Naive thymus-derived CD4-positive, alpha-beta T cell (primary cell): ENCODE measurements at regions of chr4 and their contacts with region 1.

Region 1: GRCh38 chr4:183471946-183472708 is 27.7 kb downstream of the CDKN2AIP start:
- DNase-seq: peak; percentile 51 to 81 (median 71)
- ATAC-seq: peak; percentile 89
- H3K4me3 ChIP-seq: no peak overlapping the region
- H3K4me3 Mint-ChIP-seq: peak overlapping the region in 1 of 10 donors; percentile 8
- H3K27ac ChIP-seq: no peak overlapping the region
- H3K27ac Mint-ChIP-seq: no peak overlapping the region
- H3K4me1 ChIP-seq: no peaks in the 10 kb centered on the region
- H3K4me1 Mint-ChIP-seq: peaks cover 0 to 9% (median 5%) of the 10 kb centered on the region in 7 donors
- H3K27me3 ChIP-seq: no peaks in the 10 kb centered on the region
- H3K27me3 Mint-ChIP-seq: peaks cover 0 to 10% (median 0%) of the 10 kb centered on the region in 5 donors

Region 2: DNA sequence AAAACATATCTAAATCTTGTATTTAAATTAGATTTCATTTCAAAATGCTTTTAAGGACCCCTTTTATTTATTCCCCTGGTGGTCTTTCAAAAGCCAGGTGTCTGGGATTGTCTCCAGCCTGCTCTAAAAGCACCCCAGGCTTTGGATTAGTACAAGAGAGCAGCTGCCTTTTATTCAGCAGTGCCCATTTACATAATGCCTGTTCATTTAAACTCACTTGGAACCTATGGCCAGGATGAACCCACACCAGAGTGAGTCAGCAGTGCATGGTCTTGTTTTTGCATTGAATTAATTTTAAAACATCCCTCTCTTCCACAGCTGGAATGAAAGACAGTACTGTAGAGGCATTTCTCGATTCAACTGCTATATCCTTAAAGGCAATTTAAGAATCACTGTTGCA is 1293.0 kb before region 1 on chr4:
- CTCF ChIA-PET with region 1: no interaction called
- POLR2A ChIA-PET with region 1: no interaction called
- intact Hi-C with region 1: no loop called
- DNase-seq: no peak
- ATAC-seq: no peak
- H3K4me3 ChIP-seq: no peak overlapping the region
- H3K4me3 Mint-ChIP-seq: no peak overlapping the region
- H3K27ac ChIP-seq: no peak overlapping the region
- H3K27ac Mint-ChIP-seq: no peak overlapping the region
- H3K4me1 ChIP-seq: no peaks in the 10 kb centered on the region
- H3K4me1 Mint-ChIP-seq: no peaks in the 10 kb centered on the region
- H3K27me3 ChIP-seq: no peaks in the 10 kb centered on the region
- H3K27me3 Mint-ChIP-seq: peaks cover 0 to 6% (median 0%) of the 10 kb centered on the region in 5 donors

Region 3: GRCh38 chr4:183080372-183081115 is 391.6 kb before region 1 on chr4:
- CTCF ChIA-PET with region 1: no interaction called
- POLR2A ChIA-PET with region 1: no interaction called
- intact Hi-C with region 1: no loop called
- DNase-seq: no peak
- ATAC-seq: no peak
- H3K4me3 ChIP-seq: no peak overlapping the region
- H3K4me3 Mint-ChIP-seq: no peak overlapping the region
- H3K27ac ChIP-seq: no peak overlapping the region
- H3K27ac Mint-ChIP-seq: no peak overlapping the region
- H3K4me1 ChIP-seq: no peaks in the 10 kb centered on the region
- H3K4me1 Mint-ChIP-seq: no peaks in the 10 kb centered on the region
- H3K27me3 ChIP-seq: no peaks in the 10 kb centered on the region
- H3K27me3 Mint-ChIP-seq: peaks cover 0 to 6% (median 0%) of the 10 kb centered on the region in 5 donors

Region 4: GRCh38 chr4:183541010-183541751 is 69.1 kb after region 1 on chr4:
- CTCF ChIA-PET with region 1: no interaction called
- POLR2A ChIA-PET with region 1: no interaction called
- intact Hi-C with region 1: no loop called
- DNase-seq: no peak
- ATAC-seq: no peak
- H3K4me3 ChIP-seq: no peak overlapping the region
- H3K4me3 Mint-ChIP-seq: no peak overlapping the region
- H3K27ac ChIP-seq: no peak overlapping the region
- H3K27ac Mint-ChIP-seq: no peak overlapping the region
- H3K4me1 ChIP-seq: no peaks in the 10 kb centered on the region
- H3K4me1 Mint-ChIP-seq: no peaks in the 10 kb centered on the region
- H3K27me3 ChIP-seq: no peaks in the 10 kb centered on the region
- H3K27me3 Mint-ChIP-seq: peaks cover 0 to 25% (median 14%) of the 10 kb centered on the region in 5 donors

Region 5: DNA sequence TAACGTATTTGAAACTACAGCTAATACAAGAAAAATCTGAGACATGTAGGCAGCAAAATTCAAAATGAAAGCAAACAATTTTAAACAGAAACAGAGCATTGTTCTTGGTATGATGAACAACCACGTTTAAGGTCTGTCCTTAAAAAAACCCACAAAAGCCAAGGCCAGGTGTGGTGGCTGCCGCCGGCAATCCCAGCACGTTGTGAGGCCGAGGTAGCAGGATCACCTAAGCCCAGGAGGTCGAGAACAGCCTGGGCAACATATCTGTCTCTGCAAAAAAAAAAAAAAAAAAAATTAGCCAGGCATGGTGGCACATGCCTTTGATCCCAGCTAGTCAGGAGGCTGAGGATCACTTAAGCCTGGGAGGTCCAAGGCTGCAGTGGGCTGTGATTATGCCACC is 173.2 kb after region 1 on chr4:
- CTCF ChIA-PET with region 1: interaction called, 3 read pairs
- POLR2A ChIA-PET with region 1: no interaction called
- intact Hi-C with region 1: loop called in 1 of 2 experiments (anchors 1 kb)
- DNase-seq: no peak
- ATAC-seq: no peak
- H3K4me3 ChIP-seq: no peak overlapping the region
- H3K4me3 Mint-ChIP-seq: no peak overlapping the region
- H3K27ac ChIP-seq: no peak overlapping the region
- H3K27ac Mint-ChIP-seq: no peak overlapping the region
- H3K4me1 ChIP-seq: no peaks in the 10 kb centered on the region
- H3K4me1 Mint-ChIP-seq: no peaks in the 10 kb centered on the region
- H3K27me3 ChIP-seq: no peaks in the 10 kb centered on the region
- H3K27me3 Mint-ChIP-seq: no peaks in the 10 kb centered on the region

Region 6: GRCh38 chr4:183722731-183723560 is 250.8 kb after region 1 on chr4:
- CTCF ChIA-PET with region 1: no interaction called
- POLR2A ChIA-PET with region 1: no interaction called
- intact Hi-C with region 1: loop called (anchors 1 kb)
- DNase-seq: peak; percentile 17 to 60 (median 41)
- ATAC-seq: peak; percentile 71
- H3K4me3 ChIP-seq: peak overlapping the region; percentile 64
- H3K4me3 Mint-ChIP-seq: peak overlapping the region; percentile 65 to 96 (median 89)
- H3K27ac ChIP-seq: peak overlapping the region; percentile 21
- H3K27ac Mint-ChIP-seq: peak overlapping the region; percentile 33 to 90 (median 75)
- H3K4me1 ChIP-seq: peaks cover 5 to 9% of the 10 kb centered on the region in 2 donors
- H3K4me1 Mint-ChIP-seq: peaks cover 13 to 14% (median 13%) of the 10 kb centered on the region in 7 donors
- H3K27me3 ChIP-seq: no peaks in the 10 kb centered on the region
- H3K27me3 Mint-ChIP-seq: peaks cover 0 to 48% (median 0%) of the 10 kb centered on the region in 5 donors

Region 7: GRCh38 chr4:184100297-184100885 is 628.3 kb after region 1 on chr4:
- CTCF ChIA-PET with region 1: no interaction called
- POLR2A ChIA-PET with region 1: no interaction called
- intact Hi-C with region 1: loop called in 1 of 2 experiments (anchors 5 kb)
- DNase-seq: peak in 4 of 9 donors; percentile 6 to 47 (median 32)
- ATAC-seq: peak; percentile 68
- H3K4me3 ChIP-seq: no peak overlapping the region
- H3K4me3 Mint-ChIP-seq: no peak overlapping the region
- H3K27ac ChIP-seq: no peak overlapping the region
- H3K27ac Mint-ChIP-seq: no peak overlapping the region
- H3K4me1 ChIP-seq: no peaks in the 10 kb centered on the region
- H3K4me1 Mint-ChIP-seq: peaks cover 0 to 11% (median 6%) of the 10 kb centered on the region in 7 donors
- H3K27me3 ChIP-seq: no peaks in the 10 kb centered on the region
- H3K27me3 Mint-ChIP-seq: peaks cover 7 to 23% (median 14%) of the 10 kb centered on the region in 5 donors

Region 8: DNA sequence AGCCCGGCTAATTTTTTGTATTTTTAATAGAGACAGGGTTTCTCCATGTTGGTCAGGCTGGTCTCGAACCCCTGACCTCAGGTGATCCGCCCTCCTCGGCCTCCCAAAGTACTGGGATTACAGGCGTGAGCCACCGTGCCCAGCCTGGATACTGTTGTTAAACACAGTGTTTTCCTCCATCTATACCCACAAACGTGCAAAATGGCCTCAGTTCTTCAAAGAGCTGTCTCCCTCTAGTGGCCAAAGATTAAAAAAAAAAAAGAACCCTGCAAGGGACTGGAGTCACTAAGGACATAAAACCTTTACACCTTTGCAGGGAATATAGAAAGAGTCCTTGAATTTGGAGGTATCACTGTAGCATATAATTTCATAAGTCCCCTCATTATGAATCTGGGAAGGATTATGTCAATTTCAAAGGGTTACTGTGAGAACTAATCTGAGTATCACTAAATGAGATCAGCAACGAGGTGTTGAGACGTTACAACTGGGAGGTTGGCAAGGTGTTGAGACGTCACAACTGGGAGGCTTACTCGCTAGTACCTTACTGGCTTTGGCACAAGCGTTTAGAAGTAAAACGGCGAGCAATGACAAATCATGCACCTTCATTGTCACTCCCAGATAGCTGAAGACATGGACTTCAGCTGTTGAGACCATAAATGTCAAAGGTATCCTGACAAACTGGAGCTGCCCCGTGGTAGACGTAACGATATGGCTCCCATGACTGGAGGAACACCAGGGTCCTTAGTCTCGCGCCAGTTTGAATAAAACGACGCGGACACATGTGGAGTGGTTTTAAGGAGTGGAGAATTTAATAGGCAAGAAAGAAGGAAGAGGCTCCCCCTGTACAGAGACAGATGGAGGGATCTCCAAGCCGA is 778.9 kb after region 1 on chr4:
- CTCF ChIA-PET with region 1: interaction called, 3 read pairs
- POLR2A ChIA-PET with region 1: no interaction called
- intact Hi-C with region 1: loop called in 1 of 2 experiments (anchors 1 kb)
- DNase-seq: peak in 7 of 9 donors; percentile 26 to 67 (median 59)
- ATAC-seq: peak; percentile 82
- H3K4me3 ChIP-seq: no peak overlapping the region
- H3K4me3 Mint-ChIP-seq: no peak overlapping the region
- H3K27ac ChIP-seq: no peak overlapping the region
- H3K27ac Mint-ChIP-seq: peak overlapping the region in 4 of 9 donors; percentile 1 to 65 (median 14)
- H3K4me1 ChIP-seq: no peaks in the 10 kb centered on the region
- H3K4me1 Mint-ChIP-seq: peaks cover 0 to 14% (median 0%) of the 10 kb centered on the region in 7 donors
- H3K27me3 ChIP-seq: no peaks in the 10 kb centered on the region
- H3K27me3 Mint-ChIP-seq: peaks cover 0 to 4% (median 0%) of the 10 kb centered on the region in 5 donors